GM10248 (cell line): ENCODE measurements at regions of chr5 and their contacts with region 1.

Region 1: GRCh38 chr5:337563-338130 is 16.1 kb downstream of the AHRR start:
- DNase-seq: no peak
- CTCF ChIP-seq: no peak

Region 2: GRCh38 chr5:431001-431710 is 93.5 kb after region 1 on chr5:
- CTCF ChIA-PET with region 1: interaction called, 10 read pairs
- POLR2A ChIA-PET with region 1: no interaction called
- DNase-seq: peak; percentile 81
- CTCF ChIP-seq: peak; percentile 92